IMR-90 (cell line): ENCODE measurements at regions of chr3 and their contacts with region 1.

Region 1: DNA sequence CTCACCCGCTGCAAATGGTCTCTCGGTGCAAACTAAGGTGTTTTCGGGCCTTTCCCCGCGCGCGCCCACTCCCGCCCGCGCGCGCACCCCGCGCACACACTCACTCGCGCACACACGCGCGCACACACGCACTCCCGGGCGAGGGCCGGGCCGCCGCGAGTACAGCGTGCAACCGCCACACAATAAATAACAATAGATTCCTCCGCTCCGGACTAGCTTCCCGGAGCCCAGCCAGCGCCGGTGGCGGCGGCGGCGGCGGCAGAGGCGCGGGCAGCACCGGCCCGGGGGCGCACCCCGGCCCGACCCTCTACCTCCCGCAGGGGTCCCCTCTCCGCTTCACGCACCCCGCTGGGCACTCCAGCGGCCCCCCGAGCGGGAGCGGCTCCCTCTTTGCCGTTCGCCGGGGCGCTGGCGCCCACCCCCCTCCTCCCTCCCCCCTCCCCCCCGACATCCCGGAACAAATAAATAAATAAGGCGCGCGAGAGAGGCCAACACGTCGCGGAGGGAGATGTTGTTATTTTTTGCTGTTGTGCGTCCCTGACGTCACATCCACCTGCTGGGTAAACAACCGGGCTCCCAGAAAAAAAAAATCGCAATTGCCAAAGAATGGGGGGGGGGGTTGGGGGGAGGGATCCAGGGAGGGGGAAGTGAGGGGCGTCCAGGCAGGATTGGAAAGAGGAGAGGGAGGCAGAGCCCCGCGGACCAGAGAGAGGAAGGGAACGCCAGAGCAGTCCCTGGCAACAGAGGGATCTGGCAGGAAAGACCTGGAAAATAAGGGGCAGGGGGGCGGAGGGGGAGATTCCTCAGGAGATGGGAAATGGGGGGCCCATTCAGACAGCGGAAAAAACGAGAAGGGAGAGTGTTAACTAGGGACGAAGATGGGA is at the start of gene FOXP1:
- DNase-seq: peak; percentile 64
- ATAC-seq: peak; percentile 34
- H3K4me3 ChIP-seq: peak within 1 kb of the TSS; percentile 90
- H3K27ac ChIP-seq: peak within 1 kb of the TSS; percentile 98
- H3K4me1 ChIP-seq: peaks cover 15% of the 10 kb centered on the region
- H3K27me3 ChIP-seq: no peaks in the 10 kb centered on the region
- CTCF ChIP-seq: no peak
- POLR2A ChIP-seq: no peak
- RAD21 ChIP-seq: no peak; the same call in 1 of the 2 replicates
- total RNA-seq, gene FOXP1: 128 and 132 TPM in 2 replicates

Region 2: DNA sequence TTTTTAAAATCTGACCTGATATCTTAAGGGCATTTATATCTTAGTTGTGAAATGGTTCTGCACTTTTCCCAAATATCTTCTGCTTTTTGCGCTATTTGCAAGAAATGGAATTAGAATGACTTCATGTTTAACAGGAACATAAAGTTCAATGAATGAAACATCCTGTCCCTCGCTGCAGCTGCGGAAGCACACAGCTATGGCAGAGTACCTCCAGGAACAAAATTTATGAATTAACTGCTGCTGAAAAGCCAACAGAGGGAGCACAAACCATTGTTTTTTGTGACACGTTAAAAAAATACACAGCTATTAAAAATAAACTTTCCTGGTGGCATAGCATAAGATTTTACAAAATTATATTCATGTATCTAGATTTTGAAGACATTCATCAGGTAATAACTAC is 867.0 kb before region 1 on chr3:
- CTCF ChIA-PET with region 1: interaction called, 3 read pairs
- POLR2A ChIA-PET with region 1: no interaction called
- dilution Hi-C with region 1: no loop called
- in situ Hi-C with region 1: no loop called
- intact Hi-C with region 1: loop called (anchors 5 kb)
- DNase-seq: peak; percentile 48
- ATAC-seq: peak; percentile 69
- H3K4me3 ChIP-seq: no peak overlapping the region
- H3K27ac ChIP-seq: no peak overlapping the region
- H3K4me1 ChIP-seq: no peaks in the 10 kb centered on the region
- H3K27me3 ChIP-seq: no peaks in the 10 kb centered on the region; the same call in 1 of the 2 replicates
- CTCF ChIP-seq: peak; percentile 52
- POLR2A ChIP-seq: no peak
- RAD21 ChIP-seq: peak; percentile 58

Region 3: GRCh38 chr3:71064288-71064955 is 519.4 kb before region 1 on chr3:
- CTCF ChIA-PET with region 1: interaction called, 3 read pairs
- POLR2A ChIA-PET with region 1: no interaction called
- dilution Hi-C with region 1: no loop called
- in situ Hi-C with region 1: no loop called
- intact Hi-C with region 1: loop called (anchors 2 kb)
- DNase-seq: peak; percentile 68
- ATAC-seq: peak; percentile 35
- H3K4me3 ChIP-seq: peak overlapping the region; percentile 57
- H3K27ac ChIP-seq: peak overlapping the region; percentile 94
- H3K4me1 ChIP-seq: peaks cover 11% of the 10 kb centered on the region
- H3K27me3 ChIP-seq: no peaks in the 10 kb centered on the region
- CTCF ChIP-seq: no peak
- POLR2A ChIP-seq: peak; percentile 71
- RAD21 ChIP-seq: no peak

Region 4: GRCh38 chr3:71247221-71247976 is 336.4 kb before region 1 on chr3:
- CTCF ChIA-PET with region 1: no interaction called
- POLR2A ChIA-PET with region 1: no interaction called
- dilution Hi-C with region 1: no loop called
- in situ Hi-C with region 1: no loop called
- intact Hi-C with region 1: loop called (anchors 10 kb)
- DNase-seq: peak; percentile 67
- ATAC-seq: 0 out of 2 replicates have a peak, but pooled peaks have one; percentile 8
- H3K4me3 ChIP-seq: no peak overlapping the region
- H3K27ac ChIP-seq: 0 out of 2 replicates have a peak overlapping the region, but pooled peaks have one; percentile 1
- H3K4me1 ChIP-seq: peaks cover 23% of the 10 kb centered on the region
- H3K27me3 ChIP-seq: no peaks in the 10 kb centered on the region
- CTCF ChIP-seq: no peak
- POLR2A ChIP-seq: no peak
- RAD21 ChIP-seq: no peak

Region 5: GRCh38 chr3:71397046-71397445 is 186.8 kb before region 1 on chr3:
- CTCF ChIA-PET with region 1: no interaction called
- POLR2A ChIA-PET with region 1: no interaction called
- dilution Hi-C with region 1: no loop called
- in situ Hi-C with region 1: no loop called
- intact Hi-C with region 1: loop called (anchors 1 kb)
- DNase-seq: peak; percentile 30
- ATAC-seq: peak; percentile 40; the same call in 1 of the 2 replicates
- H3K4me3 ChIP-seq: no peak overlapping the region
- H3K27ac ChIP-seq: no peak overlapping the region
- H3K4me1 ChIP-seq: peaks cover 6% of the 10 kb centered on the region
- H3K27me3 ChIP-seq: no peaks in the 10 kb centered on the region
- CTCF ChIP-seq: peak; percentile 43
- POLR2A ChIP-seq: no peak
- RAD21 ChIP-seq: peak; percentile 42

Region 6: GRCh38 chr3:71542521-71543370 is 41.1 kb before region 1 on chr3:
- CTCF ChIA-PET with region 1: no interaction called
- POLR2A ChIA-PET with region 1: no interaction called
- dilution Hi-C with region 1: no loop called
- in situ Hi-C with region 1: no loop called
- intact Hi-C with region 1: loop called (anchors 2 kb)
- DNase-seq: peak; percentile 92
- ATAC-seq: peak; percentile 98
- H3K4me3 ChIP-seq: peak overlapping the region; percentile 6; the same call in 1 of the 2 replicates
- H3K27ac ChIP-seq: peak overlapping the region; percentile 69
- H3K4me1 ChIP-seq: peaks cover 14% of the 10 kb centered on the region
- H3K27me3 ChIP-seq: no peaks in the 10 kb centered on the region
- CTCF ChIP-seq: no peak
- POLR2A ChIP-seq: no peak; the same call in 1 of the 2 replicates
- RAD21 ChIP-seq: 0 out of 2 replicates have a peak, but pooled peaks have one; percentile 17